Activated CD4-positive, alpha-beta memory T cell treated with anti-CD3 and anti-CD28 coated beads for 36 hours (primary cell): ENCODE measurements at regions of chrX and their contacts with region 1.

Region 1: GRCh38 chrX:137040976-137041728 is 7.4 kb upstream of the GPR101 start:
- DNase-seq: no peak
- H3K4me3 Mint-ChIP-seq: no peak overlapping the region
- H3K27ac Mint-ChIP-seq: no peak overlapping the region
- H3K4me1 Mint-ChIP-seq: no peaks in the 10 kb centered on the region
- H3K27me3 Mint-ChIP-seq: peaks cover 1% of the 10 kb centered on the region

Region 2: DNA sequence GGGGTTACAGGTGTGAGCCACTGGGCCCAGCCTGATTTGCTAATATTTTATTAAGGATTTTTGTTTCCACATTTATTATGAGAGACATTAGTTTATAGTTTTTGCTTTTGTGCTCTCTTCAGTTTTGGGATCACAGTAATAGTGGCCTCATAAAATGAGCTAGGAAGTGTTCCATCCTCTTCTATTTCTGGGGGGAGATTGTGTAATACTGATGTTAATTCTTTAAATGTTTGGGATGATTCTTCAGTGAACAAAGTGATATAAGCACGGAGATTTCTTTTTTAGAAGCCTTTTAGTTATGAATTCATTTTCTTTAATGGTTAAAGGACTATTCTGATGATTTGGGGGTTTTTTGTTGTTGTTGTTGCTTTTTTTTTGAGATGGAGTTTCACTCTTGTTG is 202.0 kb before region 1 on chrX:
- CTCF ChIA-PET with region 1: no interaction called
- POLR2A ChIA-PET with region 1: no interaction called
- intact Hi-C with region 1: no loop called
- DNase-seq: no peak
- H3K4me3 Mint-ChIP-seq: no peak overlapping the region
- H3K27ac Mint-ChIP-seq: no peak overlapping the region
- H3K4me1 Mint-ChIP-seq: no peaks in the 10 kb centered on the region
- H3K27me3 Mint-ChIP-seq: no peaks in the 10 kb centered on the region

Region 3: DNA sequence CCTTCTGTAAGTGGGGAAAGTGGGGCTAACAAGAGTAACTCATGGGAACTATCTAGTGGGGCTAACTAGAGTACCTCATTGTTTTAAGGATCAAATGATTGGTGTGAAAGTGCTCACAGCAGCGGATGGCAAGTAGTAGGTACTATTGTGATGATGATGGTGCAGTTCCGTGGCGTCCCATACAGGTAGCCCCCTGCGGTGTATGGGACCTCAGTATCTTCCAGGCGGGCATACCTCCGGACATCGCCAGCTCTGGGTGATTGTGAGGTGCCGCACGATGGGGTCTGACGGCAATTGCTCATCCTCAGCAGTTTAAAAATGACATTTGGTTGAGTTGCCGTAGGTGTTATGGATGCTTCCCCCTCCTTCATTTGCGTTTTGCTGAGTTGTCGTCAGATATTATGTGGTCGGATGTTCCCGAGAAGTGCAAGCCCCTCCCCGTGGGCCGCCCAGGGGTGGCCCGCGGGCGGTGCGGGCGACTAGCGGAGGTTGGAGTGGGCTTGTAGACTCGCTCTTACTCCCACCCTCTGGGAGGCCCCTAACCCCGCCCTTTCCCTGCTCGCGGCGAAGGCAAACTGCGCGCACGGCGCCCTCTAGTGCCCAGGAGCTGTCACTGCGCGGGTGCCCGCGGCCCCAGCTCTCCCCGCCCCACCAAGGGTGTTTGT is 11.0 kb after region 1 on chrX:
- CTCF ChIA-PET with region 1: interaction called, 16 read pairs
- POLR2A ChIA-PET with region 1: no interaction called
- intact Hi-C with region 1: no loop called
- DNase-seq: peak; percentile 86
- H3K4me3 Mint-ChIP-seq: peak overlapping the region; percentile 83
- H3K27ac Mint-ChIP-seq: no peak overlapping the region
- H3K4me1 Mint-ChIP-seq: peaks cover 8% of the 10 kb centered on the region
- H3K27me3 Mint-ChIP-seq: peaks cover 12% of the 10 kb centered on the region

Region 4: GRCh38 chrX:137081239-137081638 is 40.1 kb after region 1 on chrX:
- CTCF ChIA-PET with region 1: no interaction called
- POLR2A ChIA-PET with region 1: no interaction called
- intact Hi-C with region 1: no loop called
- DNase-seq: no peak
- H3K4me3 Mint-ChIP-seq: no peak overlapping the region
- H3K27ac Mint-ChIP-seq: no peak overlapping the region
- H3K4me1 Mint-ChIP-seq: no peaks in the 10 kb centered on the region
- H3K27me3 Mint-ChIP-seq: peaks cover 13% of the 10 kb centered on the region